Caco-2 (cell line): ENCODE measurements at regions of chr5 and their contacts with region 1.

Region 1: DNA sequence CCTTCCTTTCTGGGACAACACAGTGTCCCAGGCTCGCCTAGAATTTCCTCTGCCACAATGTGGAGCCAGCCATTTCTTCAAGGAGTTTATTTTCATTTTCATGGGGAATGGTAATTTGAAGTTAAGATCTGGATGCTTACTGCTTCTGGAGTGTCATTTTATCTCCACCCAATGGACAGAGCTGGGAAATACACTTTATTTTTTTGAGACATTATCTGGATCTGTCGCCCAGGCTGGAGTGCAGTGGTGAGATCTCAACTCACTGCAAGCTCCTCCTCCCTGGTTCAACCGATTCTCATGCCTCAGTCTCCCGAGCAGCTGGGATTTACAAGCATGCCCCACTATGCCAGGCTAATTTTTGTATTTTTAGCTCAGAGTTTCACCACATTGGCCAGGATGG is 12.7 kb upstream of the THG1L start:
- DNase-seq: peak in 1 of 2 experiments; percentile 64
- H3K4me3 ChIP-seq: no peak overlapping the region
- H3K4me3 Mint-ChIP-seq: no peak overlapping the region
- H3K27ac Mint-ChIP-seq: peak overlapping the region; percentile 16
- H3K4me1 ChIP-seq: no peaks in the 10 kb centered on the region
- H3K4me1 Mint-ChIP-seq: no peaks in the 10 kb centered on the region
- H3K27me3 ChIP-seq: no peaks in the 10 kb centered on the region
- H3K27me3 Mint-ChIP-seq: no peaks in the 10 kb centered on the region
- CTCF ChIP-seq: peak; percentile 62 to 67

Region 2: GRCh38 chr5:157539503-157540022 is 179.0 kb before region 1 on chr5:
- CTCF ChIA-PET with region 1: no interaction called
- POLR2A ChIA-PET with region 1: interaction called, 15 read pairs
- intact Hi-C with region 1: no loop called
- DNase-seq: no peak
- H3K4me3 ChIP-seq: no peak overlapping the region
- H3K4me3 Mint-ChIP-seq: no peak overlapping the region
- H3K27ac Mint-ChIP-seq: no peak overlapping the region
- H3K4me1 ChIP-seq: peaks cover 21% of the 10 kb centered on the region
- H3K4me1 Mint-ChIP-seq: peaks cover 25% of the 10 kb centered on the region
- H3K27me3 ChIP-seq: no peaks in the 10 kb centered on the region
- H3K27me3 Mint-ChIP-seq: no peaks in the 10 kb centered on the region
- CTCF ChIP-seq: no peak

Region 3: GRCh38 chr5:157670662-157671591 is 47.6 kb before region 1 on chr5 and contains the start of gene C5orf52:
- CTCF ChIA-PET with region 1: interaction called, 11 read pairs
- POLR2A ChIA-PET with region 1: no interaction called
- intact Hi-C with region 1: loop called (anchors 1 kb)
- DNase-seq: peak; percentile 58 to 80
- H3K4me3 ChIP-seq: peak within 1 kb of the TSS; percentile 21
- H3K4me3 Mint-ChIP-seq: peak within 1 kb of the TSS; percentile 66
- H3K27ac Mint-ChIP-seq: peak within 1 kb of the TSS; percentile 89
- H3K4me1 ChIP-seq: peaks cover 22% of the 10 kb centered on the region
- H3K4me1 Mint-ChIP-seq: peaks cover 17% of the 10 kb centered on the region
- H3K27me3 ChIP-seq: no peaks in the 10 kb centered on the region
- H3K27me3 Mint-ChIP-seq: no peaks in the 10 kb centered on the region
- CTCF ChIP-seq: no peak
- total RNA-seq, gene C5orf52: not detected in 2 replicates

Region 4: DNA sequence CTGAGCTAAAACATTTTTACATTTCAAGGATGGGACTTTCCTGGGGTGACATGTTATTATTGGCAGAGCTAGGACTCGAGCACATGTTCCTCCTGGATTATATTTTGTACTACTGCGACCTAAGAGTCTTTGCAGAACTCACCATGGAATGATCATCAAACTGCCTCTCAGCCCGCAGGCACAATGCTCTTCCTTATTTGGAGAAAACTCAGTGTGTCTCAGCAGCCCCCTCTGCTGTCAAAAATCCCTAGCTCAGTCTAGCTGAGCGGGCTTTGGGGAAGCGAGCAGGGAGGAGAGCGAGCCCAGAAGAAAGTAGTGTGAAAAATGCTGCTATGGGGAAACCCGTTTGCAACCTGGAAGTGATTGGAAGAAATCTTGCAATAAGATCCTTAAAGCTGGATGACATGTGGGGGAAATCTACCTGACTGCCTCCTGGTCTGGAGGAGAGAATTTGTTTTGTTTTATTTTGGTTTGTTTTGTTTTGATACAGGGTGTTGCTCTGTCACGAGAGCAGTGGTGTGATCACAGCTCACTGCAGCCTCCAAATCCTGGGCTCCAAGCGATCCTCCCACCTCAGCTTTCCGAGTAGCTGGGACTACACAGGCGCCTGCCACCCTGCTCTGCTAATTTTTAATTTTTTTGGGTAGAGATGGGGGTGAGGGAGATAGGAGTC is 230.4 kb after region 1 on chr5:
- CTCF ChIA-PET with region 1: no interaction called
- POLR2A ChIA-PET with region 1: no interaction called
- intact Hi-C with region 1: no loop called
- DNase-seq: peak; percentile 90 to 93
- H3K4me3 ChIP-seq: no peak overlapping the region
- H3K4me3 Mint-ChIP-seq: peak overlapping the region; percentile 51
- H3K27ac Mint-ChIP-seq: peak overlapping the region; percentile 52
- H3K4me1 ChIP-seq: peaks cover 6% of the 10 kb centered on the region; the same call in 1 of the 2 replicates
- H3K4me1 Mint-ChIP-seq: peaks cover 16% of the 10 kb centered on the region
- H3K27me3 ChIP-seq: no peaks in the 10 kb centered on the region
- H3K27me3 Mint-ChIP-seq: no peaks in the 10 kb centered on the region
- CTCF ChIP-seq: peak; percentile 86